ENCODE measurements at regions of chr6 and their contacts with region 1.

Region 1: GRCh38 chr6:24581084-24581669 is 64.8 kb downstream of the KIAA0319 start:
- DNase-seq: peak; percentile 84
- H3K4me3 ChIP-seq: no peak overlapping the region
- H3K27ac ChIP-seq: no peak overlapping the region
- H3K4me1 ChIP-seq: peaks cover 16% of the 10 kb centered on the region
- CTCF ChIP-seq: peak; percentile 94

Region 2: DNA sequence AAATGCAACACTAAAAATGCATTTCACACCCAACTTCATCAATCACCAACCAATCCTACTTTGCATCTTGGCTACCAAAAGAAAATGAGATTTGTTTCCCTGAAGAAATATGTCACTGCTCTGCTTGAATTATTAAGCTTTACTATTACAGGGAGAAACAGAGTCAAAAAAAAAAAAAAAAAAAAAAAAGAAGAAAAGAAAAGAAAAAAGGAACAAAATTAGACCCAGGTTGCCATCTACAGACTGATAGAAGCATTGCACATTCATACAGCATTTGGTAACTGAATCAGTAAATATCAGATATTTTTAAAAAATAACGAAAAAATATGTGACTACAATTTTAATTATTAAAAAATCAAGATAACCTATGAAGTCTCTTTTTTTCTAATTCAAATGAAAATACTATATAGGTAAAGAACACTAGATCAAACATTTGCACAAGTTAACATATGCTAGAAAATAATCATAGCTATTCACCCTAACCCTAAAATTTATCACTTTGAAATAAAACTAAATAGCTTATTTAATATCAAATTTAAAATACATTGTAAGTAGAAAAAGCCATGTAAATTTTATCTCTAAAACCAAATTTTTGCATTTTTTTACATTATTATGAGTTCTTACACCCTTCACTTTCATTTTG is 306.6 kb before region 1 on chr6:
- CTCF ChIA-PET with region 1: no interaction called
- POLR2A ChIA-PET with region 1: no interaction called
- intact Hi-C with region 1: no loop called
- DNase-seq: peak; percentile 15
- H3K4me3 ChIP-seq: no peak overlapping the region
- H3K27ac ChIP-seq: no peak overlapping the region
- H3K4me1 ChIP-seq: no peaks in the 10 kb centered on the region
- CTCF ChIP-seq: peak; percentile 81

Region 3: DNA sequence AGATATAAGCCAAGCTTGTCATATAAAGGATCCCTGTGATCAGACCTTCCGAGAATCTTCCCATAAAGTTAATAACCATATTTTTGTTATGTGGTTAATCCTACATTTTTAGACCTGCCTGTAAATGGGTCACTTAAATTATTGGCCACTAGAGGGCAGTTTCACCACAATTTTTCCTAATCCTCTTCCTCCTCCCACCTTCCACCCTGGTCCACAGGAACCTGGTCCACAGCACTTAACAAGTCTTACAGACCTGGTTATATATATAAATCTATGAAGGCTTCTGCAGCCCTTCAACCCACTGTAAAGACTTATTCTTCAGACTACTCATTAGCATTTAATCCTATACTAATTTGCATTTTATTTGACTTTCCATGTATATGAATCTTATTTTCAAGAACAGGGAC is 150.1 kb before region 1 on chr6:
- CTCF ChIA-PET with region 1: no interaction called
- POLR2A ChIA-PET with region 1: no interaction called
- intact Hi-C with region 1: loop called (anchors 2 kb)
- DNase-seq: peak; percentile 58
- H3K4me3 ChIP-seq: no peak overlapping the region
- H3K27ac ChIP-seq: no peak overlapping the region
- H3K4me1 ChIP-seq: no peaks in the 10 kb centered on the region
- CTCF ChIP-seq: peak; percentile 95

Region 4: DNA sequence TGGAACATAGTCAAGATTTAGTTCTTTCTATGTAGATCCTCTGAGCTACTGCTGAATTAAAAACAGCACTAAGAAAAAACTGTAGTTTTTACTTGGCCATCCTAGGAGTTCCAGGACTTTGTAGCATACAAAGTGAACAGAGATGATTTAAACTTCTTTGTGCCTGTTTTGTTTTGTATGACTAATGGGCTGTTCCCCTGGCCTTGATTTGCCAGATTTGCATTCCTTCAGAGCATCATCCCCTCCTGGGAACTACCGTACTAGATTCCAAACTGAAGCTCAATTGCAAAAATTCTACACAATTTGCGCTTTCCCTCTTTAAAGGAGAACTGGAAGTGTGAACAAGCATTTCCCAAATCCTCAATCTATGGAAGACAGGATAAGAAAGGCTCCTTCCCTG is 108.8 kb after region 1 on chr6:
- CTCF ChIA-PET with region 1: no interaction called
- POLR2A ChIA-PET with region 1: interaction called, 4 read pairs
- intact Hi-C with region 1: loop called (anchors 1 kb)
- DNase-seq: no peak
- H3K4me3 ChIP-seq: no peak overlapping the region
- H3K27ac ChIP-seq: no peak overlapping the region
- H3K4me1 ChIP-seq: peaks cover 7% of the 10 kb centered on the region
- CTCF ChIP-seq: no peak

Region 5: GRCh38 chr6:24740861-24741260 is 159.7 kb after region 1 on chr6:
- CTCF ChIA-PET with region 1: no interaction called
- POLR2A ChIA-PET with region 1: no interaction called
- intact Hi-C with region 1: no loop called
- DNase-seq: no peak
- H3K4me3 ChIP-seq: no peak overlapping the region
- H3K27ac ChIP-seq: no peak overlapping the region
- H3K4me1 ChIP-seq: peaks cover 19% of the 10 kb centered on the region
- CTCF ChIP-seq: no peak

Region 6: GRCh38 chr6:25017932-25018567 is 436.9 kb after region 1 on chr6:
- CTCF ChIA-PET with region 1: no interaction called
- POLR2A ChIA-PET with region 1: no interaction called
- intact Hi-C with region 1: loop called (anchors 5 kb)
- DNase-seq: peak; percentile 87
- H3K4me3 ChIP-seq: peak overlapping the region; percentile 10
- H3K27ac ChIP-seq: peak overlapping the region; percentile 46
- H3K4me1 ChIP-seq: peaks cover 51% of the 10 kb centered on the region
- CTCF ChIP-seq: peak; percentile 98